ENCODE measurements at regions of chr2 and their contacts with region 1.

Region 1: DNA sequence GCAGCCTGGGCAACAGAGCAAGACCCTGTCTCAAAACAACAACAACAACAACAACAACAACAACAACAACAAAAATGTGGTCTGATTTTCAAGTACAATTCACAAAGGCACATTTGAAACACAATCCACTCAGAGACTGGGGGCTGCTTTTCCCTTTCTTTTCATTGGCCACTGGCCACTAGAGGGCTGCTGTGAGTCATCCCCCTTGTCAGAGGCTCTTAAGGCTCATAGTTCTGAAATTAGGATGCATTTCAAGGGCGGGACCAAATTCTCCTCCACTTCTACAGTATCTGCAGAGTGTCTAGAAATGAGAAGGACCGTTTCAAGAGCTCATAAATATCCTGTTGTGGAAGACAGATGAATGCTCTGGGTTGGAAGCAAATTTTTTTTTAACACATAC is 285.4 kb downstream of the NRXN1 start:
- DNase-seq: peak in 1 of 2 experiments; percentile 64
- H3K4me3 ChIP-seq: no peak overlapping the region
- H3K27ac ChIP-seq: no peak overlapping the region
- H3K4me1 ChIP-seq: no peaks in the 10 kb centered on the region
- H3K27me3 ChIP-seq: no peaks in the 10 kb centered on the region
- CTCF ChIP-seq: peak; percentile 54 to 78 (median 71)
- EP300 ChIP-seq: no peak
- POLR2A ChIP-seq: no peak
- RAD21 ChIP-seq: peak; percentile 75 to 80

Region 2: DNA sequence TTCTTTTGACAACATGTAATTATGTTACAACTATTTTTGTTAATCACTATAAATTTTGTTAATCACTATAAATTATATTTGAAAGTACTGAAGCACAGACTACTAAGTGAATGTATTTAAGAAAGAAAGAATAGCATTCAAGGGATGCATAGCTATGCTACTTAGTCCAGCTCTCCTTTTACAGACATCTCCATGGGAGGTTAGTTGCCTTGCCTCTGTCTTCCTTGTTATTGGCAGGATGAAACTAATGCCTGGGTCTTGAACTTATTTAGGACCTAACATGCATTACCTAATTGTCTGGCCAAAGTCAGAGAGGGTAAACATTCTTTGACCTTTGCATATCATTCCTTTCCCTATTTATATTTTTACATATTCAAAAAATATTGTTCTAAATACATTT is 234.1 kb before region 1 on chr2:
- CTCF ChIA-PET with region 1: no interaction called
- POLR2A ChIA-PET with region 1: no interaction called
- DNase-seq: no peak
- H3K4me3 ChIP-seq: no peak overlapping the region
- H3K27ac ChIP-seq: no peak overlapping the region
- H3K4me1 ChIP-seq: peaks cover 0 to 6% (median 1%) of the 10 kb centered on the region in 4 experiments; a peak in 3 of 7 replicates
- H3K27me3 ChIP-seq: no peaks in the 10 kb centered on the region
- CTCF ChIP-seq: no peak
- EP300 ChIP-seq: no peak
- POLR2A ChIP-seq: no peak
- RAD21 ChIP-seq: no peak

Region 3: DNA sequence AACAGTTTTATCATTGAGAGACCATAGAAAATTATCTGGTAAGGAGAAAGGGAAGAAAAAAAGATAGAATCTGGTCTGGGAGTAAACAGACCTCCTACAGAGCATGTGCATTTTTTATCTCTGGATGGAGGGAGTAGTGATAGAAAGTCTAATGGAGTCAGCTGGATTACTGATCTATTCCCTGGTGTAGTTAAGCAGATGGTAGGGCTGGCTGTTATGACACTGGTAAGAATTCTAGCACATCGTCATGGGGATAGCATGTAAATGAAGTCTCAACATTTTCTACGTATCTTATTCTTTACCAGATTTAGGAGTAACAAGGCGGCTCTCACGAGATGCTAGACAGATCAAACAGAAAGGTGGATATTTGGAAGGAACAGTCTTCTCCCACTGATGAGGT is 122.0 kb before region 1 on chr2:
- CTCF ChIA-PET with region 1: no interaction called
- POLR2A ChIA-PET with region 1: no interaction called
- DNase-seq: no peak
- H3K4me3 ChIP-seq: no peak overlapping the region
- H3K27ac ChIP-seq: no peak overlapping the region
- H3K4me1 ChIP-seq: no peaks in the 10 kb centered on the region
- H3K27me3 ChIP-seq: no peaks in the 10 kb centered on the region
- CTCF ChIP-seq: no peak
- EP300 ChIP-seq: no peak
- POLR2A ChIP-seq: no peak
- RAD21 ChIP-seq: no peak

Region 4: GRCh38 chr2:50732796-50733195 is 13.7 kb before region 1 on chr2:
- CTCF ChIA-PET with region 1: interaction called, 18 read pairs
- POLR2A ChIA-PET with region 1: no interaction called
- DNase-seq: no peak
- H3K4me3 ChIP-seq: no peak overlapping the region
- H3K27ac ChIP-seq: no peak overlapping the region
- H3K4me1 ChIP-seq: peaks cover 2 to 10% (median 6%) of the 10 kb centered on the region in 4 experiments; a peak in 5 of 7 replicates
- H3K27me3 ChIP-seq: no peaks in the 10 kb centered on the region
- CTCF ChIP-seq: no peak
- EP300 ChIP-seq: no peak
- POLR2A ChIP-seq: no peak
- RAD21 ChIP-seq: no peak

Region 5: DNA sequence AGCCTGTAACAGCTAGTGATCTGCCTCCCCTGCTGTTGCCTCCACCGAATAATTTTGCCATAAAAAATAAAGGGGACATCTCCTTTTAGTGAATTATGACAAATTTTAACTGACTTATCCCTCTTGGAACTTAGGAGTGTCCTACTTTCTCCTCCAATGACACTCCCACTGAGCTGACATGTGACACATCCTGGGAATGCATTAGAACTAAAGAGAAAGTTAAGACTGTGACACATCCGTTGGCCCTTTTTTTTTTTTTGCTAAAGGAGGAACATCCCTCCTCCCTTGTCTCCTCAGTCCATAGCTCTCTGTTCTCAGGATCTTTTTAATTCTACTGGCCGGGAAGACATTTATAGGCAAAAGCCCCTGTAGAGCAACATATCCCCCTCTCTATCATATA is 17.2 kb after region 1 on chr2:
- CTCF ChIA-PET with region 1: interaction called, 10 read pairs
- POLR2A ChIA-PET with region 1: interaction called, 3 read pairs
- DNase-seq: no peak
- H3K4me3 ChIP-seq: no peak overlapping the region
- H3K27ac ChIP-seq: no peak overlapping the region
- H3K4me1 ChIP-seq: peaks cover 0 to 4% (median 0%) of the 10 kb centered on the region in 4 experiments; a peak in 3 of 7 replicates
- H3K27me3 ChIP-seq: no peaks in the 10 kb centered on the region
- CTCF ChIP-seq: no peak
- EP300 ChIP-seq: no peak
- POLR2A ChIP-seq: no peak
- RAD21 ChIP-seq: no peak

Region 6: DNA sequence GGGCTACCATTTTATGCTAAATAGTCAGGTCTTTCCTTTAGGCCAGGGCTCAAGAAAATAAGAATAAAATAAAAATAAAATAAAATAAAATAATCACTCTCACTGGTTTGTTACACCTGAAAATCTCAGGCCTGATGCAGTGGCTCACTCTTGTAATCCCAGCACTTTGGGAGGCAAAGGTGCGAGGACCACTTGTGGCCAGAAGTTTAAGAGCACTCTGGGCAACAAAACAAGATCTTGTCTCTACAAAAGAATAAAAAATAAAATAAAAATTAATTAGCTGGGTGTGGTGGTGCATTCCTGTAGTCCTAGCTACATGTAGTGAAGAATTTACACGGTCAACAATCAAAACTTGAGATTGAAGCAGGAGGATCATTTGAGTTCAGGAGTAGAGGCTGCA is 126.0 kb after region 1 on chr2:
- CTCF ChIA-PET with region 1: interaction called, 10 read pairs
- POLR2A ChIA-PET with region 1: no interaction called
- DNase-seq: no peak
- H3K4me3 ChIP-seq: no peak overlapping the region
- H3K27ac ChIP-seq: no peak overlapping the region
- H3K4me1 ChIP-seq: no peaks in the 10 kb centered on the region
- H3K27me3 ChIP-seq: no peaks in the 10 kb centered on the region
- CTCF ChIP-seq: peak; percentile 20 to 44 (median 36); a peak in 3 of 4 replicates
- EP300 ChIP-seq: no peak
- POLR2A ChIP-seq: no peak
- RAD21 ChIP-seq: peak; percentile 41 to 58

Region 7: DNA sequence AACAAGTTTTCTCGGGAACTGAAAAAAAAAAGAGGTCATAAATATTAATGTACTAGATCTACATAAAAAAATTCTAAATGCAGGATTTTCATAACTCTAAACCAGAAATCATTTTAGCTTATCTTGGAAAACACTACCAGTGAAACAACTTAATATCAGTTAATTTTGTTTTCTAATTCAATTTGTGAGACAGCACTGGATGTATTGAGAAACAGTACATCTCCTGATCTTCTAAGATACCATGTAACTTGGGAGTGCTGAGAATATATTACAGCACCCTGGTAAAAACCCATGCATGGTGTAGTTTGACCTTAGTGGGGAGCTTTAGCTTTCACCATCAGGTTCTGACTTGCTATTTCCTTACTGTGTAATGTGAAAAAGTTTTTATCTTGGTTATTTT is 155.8 kb after region 1 on chr2:
- CTCF ChIA-PET with region 1: no interaction called
- POLR2A ChIA-PET with region 1: no interaction called
- DNase-seq: no peak
- H3K4me3 ChIP-seq: no peak overlapping the region
- H3K27ac ChIP-seq: no peak overlapping the region
- H3K4me1 ChIP-seq: no peaks in the 10 kb centered on the region
- H3K27me3 ChIP-seq: no peaks in the 10 kb centered on the region
- CTCF ChIP-seq: no peak
- EP300 ChIP-seq: no peak
- POLR2A ChIP-seq: no peak
- RAD21 ChIP-seq: no peak

Measured in H1 (cell line).